CD8-positive, alpha-beta T cell (primary cell): ENCODE measurements at regions of chr2 and their contacts with region 1.

Region 1: DNA sequence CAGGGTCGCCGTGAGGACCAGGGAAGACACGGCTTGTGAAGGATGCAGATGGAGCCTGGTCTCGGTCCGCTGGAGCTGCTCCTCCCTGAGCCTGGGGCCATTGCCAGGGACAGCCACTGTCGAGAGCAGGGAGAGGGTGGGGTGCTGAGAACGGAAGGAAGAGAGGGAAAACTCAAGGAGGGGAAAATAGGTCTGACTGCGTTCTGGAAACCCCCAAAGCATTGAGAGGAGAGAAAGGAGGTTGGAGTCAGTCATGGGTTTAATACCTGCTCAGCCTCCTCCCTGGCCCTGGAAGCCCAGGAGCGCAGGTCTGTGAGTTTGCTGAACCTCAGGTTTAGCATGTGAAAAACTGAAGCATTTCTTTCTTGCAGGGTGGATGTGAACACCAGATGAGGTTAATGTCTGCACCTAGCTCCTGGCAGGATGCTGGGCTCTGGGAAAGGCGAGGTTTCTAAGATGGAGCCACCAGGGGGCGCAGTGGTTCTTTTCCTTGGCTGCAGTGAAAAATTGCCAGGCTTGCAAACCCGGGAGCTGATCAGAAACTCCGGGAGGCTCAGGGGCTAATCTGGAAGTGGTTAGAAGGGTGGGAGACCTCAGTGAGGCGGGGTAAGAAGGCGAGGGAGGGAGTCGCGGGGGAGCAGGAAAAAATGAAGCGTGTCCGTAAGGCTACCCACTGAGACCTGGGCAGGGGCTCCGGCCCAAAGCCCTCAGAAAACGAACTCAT is 33.6 kb upstream of the RNF149 start:
- DNase-seq: peak; percentile 36 to 85 (median 71)
- ATAC-seq: peak; percentile 52
- H3K4me3 ChIP-seq: no peak overlapping the region
- H3K4me3 Mint-ChIP-seq: no peak overlapping the region
- H3K27ac ChIP-seq: no peak overlapping the region
- H3K27ac Mint-ChIP-seq: no peak overlapping the region
- H3K4me1 ChIP-seq: peaks cover 15% of the 10 kb centered on the region
- H3K4me1 Mint-ChIP-seq: peaks cover 24% of the 10 kb centered on the region
- H3K27me3 ChIP-seq: no peaks in the 10 kb centered on the region
- H3K27me3 Mint-ChIP-seq: no peaks in the 10 kb centered on the region
- CTCF ChIP-seq: peak; percentile 76

Region 2: GRCh38 chr2:100029454-100029853 is 1312.6 kb before region 1 on chr2:
- CTCF ChIA-PET with region 1: no interaction called
- POLR2A ChIA-PET with region 1: no interaction called
- intact Hi-C with region 1: no loop called
- DNase-seq: no peak
- ATAC-seq: no peak
- H3K4me3 ChIP-seq: no peak overlapping the region
- H3K4me3 Mint-ChIP-seq: no peak overlapping the region
- H3K27ac ChIP-seq: no peak overlapping the region
- H3K27ac Mint-ChIP-seq: no peak overlapping the region
- H3K4me1 ChIP-seq: no peaks in the 10 kb centered on the region
- H3K4me1 Mint-ChIP-seq: no peaks in the 10 kb centered on the region
- H3K27me3 ChIP-seq: no peaks in the 10 kb centered on the region
- H3K27me3 Mint-ChIP-seq: no peaks in the 10 kb centered on the region
- CTCF ChIP-seq: no peak

Region 3: DNA sequence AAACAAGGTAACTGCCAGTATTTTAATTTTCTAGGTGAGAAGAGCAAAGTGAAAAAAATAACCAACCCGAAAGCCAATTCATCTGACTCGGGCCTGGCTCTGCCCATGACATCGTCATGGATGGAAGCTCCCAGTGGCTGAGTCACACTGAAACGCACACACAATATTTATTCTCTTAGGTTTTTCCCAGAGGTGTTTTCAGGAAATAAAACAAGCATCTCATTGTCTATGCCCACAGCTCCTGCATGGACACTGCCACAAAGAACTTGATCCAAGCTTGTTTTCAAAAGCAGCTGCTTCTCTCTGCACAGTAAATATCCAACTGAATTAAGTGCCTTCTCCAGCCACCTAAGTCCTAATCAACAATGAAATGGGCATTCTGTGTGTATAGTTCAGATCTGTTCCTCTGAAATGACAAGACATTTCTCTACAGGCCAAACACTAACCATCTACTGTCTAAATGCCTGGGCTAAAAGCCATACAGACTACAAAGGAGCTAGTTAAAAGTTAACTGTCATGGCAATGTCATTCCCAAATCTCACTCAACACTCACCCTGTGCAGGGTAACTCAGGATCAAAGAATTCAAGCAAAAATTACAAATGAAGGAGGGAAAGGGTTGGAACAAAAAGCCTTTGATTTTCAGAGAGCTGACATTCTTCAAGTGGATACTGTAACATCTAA is 277.1 kb before region 1 on chr2:
- CTCF ChIA-PET with region 1: no interaction called
- POLR2A ChIA-PET with region 1: no interaction called
- intact Hi-C with region 1: no loop called
- DNase-seq: no peak
- ATAC-seq: no peak
- H3K4me3 ChIP-seq: no peak overlapping the region
- H3K4me3 Mint-ChIP-seq: no peak overlapping the region
- H3K27ac ChIP-seq: no peak overlapping the region
- H3K27ac Mint-ChIP-seq: no peak overlapping the region
- H3K4me1 ChIP-seq: no peaks in the 10 kb centered on the region
- H3K4me1 Mint-ChIP-seq: no peaks in the 10 kb centered on the region
- H3K27me3 ChIP-seq: no peaks in the 10 kb centered on the region
- H3K27me3 Mint-ChIP-seq: no peaks in the 10 kb centered on the region
- CTCF ChIP-seq: no peak

Region 4: GRCh38 chr2:101300164-101300563 is 41.9 kb before region 1 on chr2:
- CTCF ChIA-PET with region 1: interaction called, 23 read pairs
- POLR2A ChIA-PET with region 1: interaction called, 3 read pairs
- intact Hi-C with region 1: no loop called
- DNase-seq: no peak
- ATAC-seq: no peak
- H3K4me3 ChIP-seq: no peak overlapping the region
- H3K4me3 Mint-ChIP-seq: peak overlapping the region; percentile 56
- H3K27ac ChIP-seq: peak overlapping the region in 1 of 2 experiments; percentile 43
- H3K27ac Mint-ChIP-seq: peak overlapping the region; percentile 80
- H3K4me1 ChIP-seq: peaks cover 72% of the 10 kb centered on the region
- H3K4me1 Mint-ChIP-seq: peaks cover 95% of the 10 kb centered on the region
- H3K27me3 ChIP-seq: no peaks in the 10 kb centered on the region
- H3K27me3 Mint-ChIP-seq: no peaks in the 10 kb centered on the region
- CTCF ChIP-seq: no peak

Region 5: DNA sequence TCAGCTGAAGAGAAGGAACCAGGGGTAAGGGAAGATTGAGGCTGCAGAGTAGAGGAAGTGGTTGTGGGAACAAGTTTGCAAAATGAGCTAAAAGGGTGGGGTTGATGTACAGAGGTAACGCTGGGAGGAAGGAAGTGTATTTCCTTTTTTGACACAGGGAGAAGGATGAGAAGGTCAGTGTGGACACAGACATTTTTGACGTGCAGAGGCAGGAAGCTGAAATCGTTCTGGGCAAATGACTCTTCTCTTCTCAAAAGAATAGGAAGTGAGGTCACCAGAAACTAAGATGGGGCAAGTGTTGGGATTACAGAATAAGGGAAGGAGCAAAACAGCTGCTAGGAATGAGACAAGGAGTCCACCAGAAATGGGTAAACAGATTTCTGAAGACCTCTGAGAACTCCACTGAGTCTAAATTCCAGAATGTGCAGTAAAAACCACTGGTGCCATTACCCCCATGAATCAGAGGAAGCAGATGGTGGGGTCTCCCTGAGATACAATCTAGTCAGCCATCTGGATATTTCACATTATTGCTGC is 13.5 kb before region 1 on chr2:
- CTCF ChIA-PET with region 1: interaction called, 67 read pairs
- POLR2A ChIA-PET with region 1: interaction called, 3 read pairs
- intact Hi-C with region 1: no loop called
- DNase-seq: peak in 5 of 9 experiments; percentile 29 to 81 (median 57)
- ATAC-seq: peak; percentile 77
- H3K4me3 ChIP-seq: peak overlapping the region in 1 of 2 experiments; percentile 14
- H3K4me3 Mint-ChIP-seq: no peak overlapping the region
- H3K27ac ChIP-seq: peak overlapping the region; percentile 37 to 84
- H3K27ac Mint-ChIP-seq: no peak overlapping the region
- H3K4me1 ChIP-seq: peaks cover 60% of the 10 kb centered on the region
- H3K4me1 Mint-ChIP-seq: peaks cover 15% of the 10 kb centered on the region
- H3K27me3 ChIP-seq: no peaks in the 10 kb centered on the region
- H3K27me3 Mint-ChIP-seq: no peaks in the 10 kb centered on the region
- CTCF ChIP-seq: no peak

Region 6: DNA sequence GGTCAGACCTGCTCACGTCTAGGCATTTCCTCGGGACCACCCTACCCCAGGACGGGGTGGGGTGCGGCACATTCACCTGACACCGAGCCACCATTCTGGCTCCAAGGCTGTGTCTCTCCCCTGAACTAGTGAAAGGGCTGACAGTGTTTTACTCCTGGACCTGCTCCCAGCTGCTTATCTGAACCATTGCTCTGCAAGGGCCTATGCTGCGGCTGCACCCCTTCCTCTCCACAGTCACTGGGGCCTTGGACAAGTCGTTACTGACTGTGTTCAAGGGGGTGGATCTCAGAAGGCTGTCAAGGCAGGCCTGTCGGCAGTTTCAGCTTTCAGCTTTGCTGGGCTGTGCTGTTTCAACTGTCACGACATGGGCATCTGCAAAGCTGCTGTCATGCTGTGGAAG is 33.6 kb after region 1 on chr2:
- CTCF ChIA-PET with region 1: interaction called, 10 read pairs
- POLR2A ChIA-PET with region 1: no interaction called
- intact Hi-C with region 1: no loop called
- DNase-seq: no peak
- ATAC-seq: no peak
- H3K4me3 ChIP-seq: no peak overlapping the region
- H3K4me3 Mint-ChIP-seq: no peak overlapping the region
- H3K27ac ChIP-seq: no peak overlapping the region
- H3K27ac Mint-ChIP-seq: no peak overlapping the region
- H3K4me1 ChIP-seq: no peaks in the 10 kb centered on the region
- H3K4me1 Mint-ChIP-seq: peaks cover 3% of the 10 kb centered on the region
- H3K27me3 ChIP-seq: peaks cover 0 to 2% of the 10 kb centered on the region in 2 experiments
- H3K27me3 Mint-ChIP-seq: no peaks in the 10 kb centered on the region
- CTCF ChIP-seq: no peak

Region 7: GRCh38 chr2:101419096-101419663 is 77.1 kb after region 1 on chr2:
- CTCF ChIA-PET with region 1: interaction called, 21 read pairs
- POLR2A ChIA-PET with region 1: no interaction called
- intact Hi-C with region 1: no loop called
- DNase-seq: peak; percentile 11 to 78 (median 63)
- ATAC-seq: peak; percentile 71
- H3K4me3 ChIP-seq: no peak overlapping the region
- H3K4me3 Mint-ChIP-seq: no peak overlapping the region
- H3K27ac ChIP-seq: no peak overlapping the region
- H3K27ac Mint-ChIP-seq: no peak overlapping the region
- H3K4me1 ChIP-seq: no peaks in the 10 kb centered on the region
- H3K4me1 Mint-ChIP-seq: no peaks in the 10 kb centered on the region
- H3K27me3 ChIP-seq: no peaks in the 10 kb centered on the region
- H3K27me3 Mint-ChIP-seq: no peaks in the 10 kb centered on the region
- CTCF ChIP-seq: peak; percentile 82

Region 8: GRCh38 chr2:101831351-101831865 is 489.3 kb after region 1 on chr2:
- CTCF ChIA-PET with region 1: interaction called, 14 read pairs
- POLR2A ChIA-PET with region 1: interaction called, 3 read pairs
- intact Hi-C with region 1: loop called (anchors 1 to 5 kb)
- DNase-seq: peak; percentile 30 to 75 (median 62)
- ATAC-seq: peak; percentile 67
- H3K4me3 ChIP-seq: no peak overlapping the region
- H3K4me3 Mint-ChIP-seq: no peak overlapping the region
- H3K27ac ChIP-seq: no peak overlapping the region
- H3K27ac Mint-ChIP-seq: peak overlapping the region; percentile 5
- H3K4me1 ChIP-seq: peaks cover 47% of the 10 kb centered on the region
- H3K4me1 Mint-ChIP-seq: peaks cover 52% of the 10 kb centered on the region
- H3K27me3 ChIP-seq: no peaks in the 10 kb centered on the region
- H3K27me3 Mint-ChIP-seq: no peaks in the 10 kb centered on the region
- CTCF ChIP-seq: peak; percentile 42